ENCODE measurements at regions of chr13 and their contacts with region 1.

Region 1: GRCh38 chr13:45055198-45055901 is 65.0 kb upstream of the GTF2F2 start:
- DNase-seq: no peak
- H3K4me3 ChIP-seq: no peak overlapping the region
- H3K4me3 Mint-ChIP-seq: no peak overlapping the region
- H3K27ac ChIP-seq: no peak overlapping the region
- H3K27ac Mint-ChIP-seq: no peak overlapping the region
- H3K4me1 ChIP-seq: no peaks in the 10 kb centered on the region
- H3K4me1 Mint-ChIP-seq: peaks cover 2 to 9% (median 5%) of the 10 kb centered on the region in 3 donors
- H3K27me3 ChIP-seq: no peaks in the 10 kb centered on the region
- H3K27me3 Mint-ChIP-seq: peaks cover 4 to 22% of the 10 kb centered on the region in 2 donors

Region 2: DNA sequence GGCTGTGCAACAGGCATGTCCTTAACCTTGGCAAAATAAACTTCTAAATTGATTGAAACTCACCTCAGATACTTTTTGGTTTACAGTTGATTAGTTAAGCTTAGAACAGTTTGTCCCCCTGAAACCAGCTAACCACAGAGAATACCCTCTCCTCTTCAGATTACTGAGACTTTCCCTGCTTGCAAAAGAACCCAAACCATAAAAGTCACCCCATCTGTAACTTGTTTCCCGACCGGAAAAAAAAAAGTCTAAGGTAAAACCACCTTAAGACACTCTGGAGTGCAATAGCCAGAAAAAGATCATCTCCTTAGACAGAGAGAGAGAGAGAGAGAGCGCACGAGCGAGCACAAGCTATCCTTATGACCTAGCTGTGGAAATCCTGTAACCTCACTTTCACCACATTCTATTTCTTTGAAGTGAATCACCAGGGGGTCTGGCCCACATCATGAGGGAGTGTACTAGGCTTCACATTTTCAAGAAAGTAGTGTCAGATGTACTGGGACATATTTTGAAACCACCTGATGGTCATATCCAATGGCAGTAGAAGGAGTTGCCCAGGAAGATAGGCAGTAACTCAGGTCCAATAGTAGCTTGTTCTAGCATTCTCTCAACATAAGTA is 53.9 kb after region 1 on chr13:
- CTCF ChIA-PET with region 1: no interaction called
- POLR2A ChIA-PET with region 1: interaction called, 16 read pairs
- DNase-seq: peak in 2 of 5 donors; percentile 13 to 17
- H3K4me3 ChIP-seq: no peak overlapping the region
- H3K4me3 Mint-ChIP-seq: peak overlapping the region in 4 of 7 donors; percentile 33 to 47 (median 38)
- H3K27ac ChIP-seq: no peak overlapping the region
- H3K27ac Mint-ChIP-seq: peak overlapping the region in 1 of 8 donors; percentile 38
- H3K4me1 ChIP-seq: no peaks in the 10 kb centered on the region
- H3K4me1 Mint-ChIP-seq: peaks cover 3 to 7% (median 5%) of the 10 kb centered on the region in 3 donors
- H3K27me3 ChIP-seq: peaks cover 3% of the 10 kb centered on the region
- H3K27me3 Mint-ChIP-seq: peaks cover 0 to 16% of the 10 kb centered on the region in 2 donors

Region 3: GRCh38 chr13:45120967-45121831 is 65.8 kb after region 1 on chr13:
- CTCF ChIA-PET with region 1: no interaction called
- POLR2A ChIA-PET with region 1: interaction called, 11 read pairs
- DNase-seq: no peak
- H3K4me3 ChIP-seq: peak overlapping the region; percentile 94
- H3K4me3 Mint-ChIP-seq: no peak overlapping the region
- H3K27ac ChIP-seq: peak overlapping the region; percentile 93
- H3K27ac Mint-ChIP-seq: no peak overlapping the region
- H3K4me1 ChIP-seq: peaks cover 25% of the 10 kb centered on the region
- H3K4me1 Mint-ChIP-seq: peaks cover 20 to 32% (median 30%) of the 10 kb centered on the region in 3 donors
- H3K27me3 ChIP-seq: no peaks in the 10 kb centered on the region
- H3K27me3 Mint-ChIP-seq: no peaks in the 10 kb centered on the region

Measured in CD8-positive, alpha-beta memory T cell (primary cell).